CD8-positive, alpha-beta T cell (primary cell): ENCODE measurements at regions of chr12 and their contacts with region 1.

Region 1: GRCh38 chr12:46372544-46373110 is at the start of gene SLC38A2:
- DNase-seq: peak; percentile 94 to 99 (median 97)
- ATAC-seq: peak; percentile 84
- H3K4me3 ChIP-seq: peak within 1 kb of the TSS; percentile 93 to 96
- H3K4me3 Mint-ChIP-seq: peak within 1 kb of the TSS; percentile 89
- H3K27ac ChIP-seq: peak within 1 kb of the TSS; percentile 88 to 93
- H3K27ac Mint-ChIP-seq: peak within 1 kb of the TSS; percentile 98
- H3K4me1 ChIP-seq: peaks cover 38% of the 10 kb centered on the region
- H3K4me1 Mint-ChIP-seq: peaks cover 50% of the 10 kb centered on the region
- H3K27me3 ChIP-seq: no peaks in the 10 kb centered on the region
- H3K27me3 Mint-ChIP-seq: no peaks in the 10 kb centered on the region
- CTCF ChIP-seq: no peak
- total RNA-seq, gene SLC38A2: 268 to 279 TPM

Region 2: DNA sequence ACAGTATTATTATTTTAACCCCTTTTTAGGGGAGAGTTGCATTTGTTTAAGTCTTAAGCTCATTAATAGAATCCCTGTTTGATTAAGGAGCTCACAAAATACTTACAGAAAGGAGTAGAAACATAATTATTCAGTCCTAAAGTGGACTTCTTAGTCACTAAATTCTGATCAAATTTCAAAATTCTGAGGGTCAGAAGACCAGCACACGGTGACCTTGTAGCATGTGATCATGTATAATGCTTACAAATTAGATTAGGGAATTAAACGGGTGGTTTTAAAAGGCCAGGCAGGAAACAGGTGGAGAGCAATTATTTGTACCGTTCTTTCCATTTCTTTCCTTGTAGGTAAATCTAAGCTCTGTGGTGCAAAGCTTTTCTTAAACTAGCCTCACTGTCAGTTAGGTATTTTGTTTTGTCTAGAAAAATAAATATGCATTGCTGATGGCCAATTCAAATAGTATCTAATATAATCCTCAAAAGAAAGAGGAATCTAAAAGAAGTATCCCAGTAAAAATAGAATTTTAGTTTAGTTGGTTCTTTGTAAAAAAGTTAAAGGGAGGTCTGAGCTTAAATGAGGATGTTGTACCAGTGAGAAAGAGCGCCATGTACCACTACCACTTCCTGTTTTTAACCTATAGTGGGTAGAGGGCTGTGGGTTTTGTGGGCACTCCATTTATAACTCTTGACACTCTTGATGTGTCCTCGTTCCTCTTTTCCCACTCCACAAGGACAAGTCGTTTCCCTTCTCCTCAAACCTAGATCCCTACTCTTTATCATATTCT is 154.9 kb before region 1 on chr12:
- CTCF ChIA-PET with region 1: no interaction called
- POLR2A ChIA-PET with region 1: interaction called, 11 read pairs
- intact Hi-C with region 1: loop called (anchors 2 kb)
- DNase-seq: peak in 8 of 9 experiments; percentile 44 to 88 (median 66)
- ATAC-seq: peak; percentile 11
- H3K4me3 ChIP-seq: peak overlapping the region; percentile 34 to 47
- H3K4me3 Mint-ChIP-seq: peak overlapping the region; percentile 79
- H3K27ac ChIP-seq: peak overlapping the region; percentile 83 to 92
- H3K27ac Mint-ChIP-seq: peak overlapping the region; percentile 98
- H3K4me1 ChIP-seq: peaks cover 98% of the 10 kb centered on the region
- H3K4me1 Mint-ChIP-seq: peaks cover 96% of the 10 kb centered on the region
- H3K27me3 ChIP-seq: no peaks in the 10 kb centered on the region
- H3K27me3 Mint-ChIP-seq: no peaks in the 10 kb centered on the region
- CTCF ChIP-seq: no peak

Region 3: DNA sequence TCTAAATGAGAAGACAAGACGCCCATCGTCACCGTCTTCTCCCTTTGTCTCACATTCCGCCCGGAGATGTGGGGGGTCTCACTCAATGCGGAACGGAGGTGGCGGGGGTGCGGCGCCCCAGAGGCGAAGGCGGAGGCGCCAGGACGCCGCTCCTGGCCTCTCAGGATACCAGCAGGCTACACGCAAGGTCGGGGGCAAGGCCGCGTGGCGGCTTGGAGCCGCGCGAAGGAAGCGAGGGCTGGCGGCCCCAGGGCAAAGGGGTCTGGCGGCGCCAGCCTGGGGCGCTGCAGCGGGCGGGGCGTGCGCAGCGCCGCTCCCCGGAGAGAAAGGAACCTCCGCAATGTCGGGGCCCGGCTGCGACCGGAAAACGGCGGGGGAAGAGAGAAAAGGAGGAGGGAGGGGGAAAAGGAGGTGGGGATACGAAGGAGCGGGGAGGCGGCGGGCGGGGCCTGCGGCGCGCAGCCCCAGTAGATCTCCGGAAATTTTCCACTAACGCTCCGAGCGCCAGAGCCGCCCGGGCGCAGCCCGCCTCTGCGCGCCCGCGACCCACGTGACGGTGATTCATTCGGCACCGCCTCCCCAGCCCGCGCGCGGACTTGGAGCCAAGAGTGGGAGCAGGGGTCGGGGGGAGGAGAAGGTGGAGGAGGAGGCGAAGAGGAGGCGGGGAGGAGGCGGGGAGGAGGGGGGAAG is 10.5 kb after region 1 on chr12:
- CTCF ChIA-PET with region 1: interaction called, 3 read pairs
- POLR2A ChIA-PET with region 1: interaction called, 36 read pairs
- intact Hi-C with region 1: loop called (anchors 1 kb)
- DNase-seq: peak; percentile 70 to 97 (median 93)
- ATAC-seq: peak; percentile 76
- H3K4me3 ChIP-seq: peak overlapping the region; percentile 82 to 93
- H3K4me3 Mint-ChIP-seq: peak overlapping the region; percentile 90
- H3K27ac ChIP-seq: peak overlapping the region; percentile 91 to 93
- H3K27ac Mint-ChIP-seq: peak overlapping the region; percentile 96
- H3K4me1 ChIP-seq: peaks cover 38% of the 10 kb centered on the region
- H3K4me1 Mint-ChIP-seq: peaks cover 36% of the 10 kb centered on the region
- H3K27me3 ChIP-seq: no peaks in the 10 kb centered on the region
- H3K27me3 Mint-ChIP-seq: no peaks in the 10 kb centered on the region
- CTCF ChIP-seq: no peak

Region 4: DNA sequence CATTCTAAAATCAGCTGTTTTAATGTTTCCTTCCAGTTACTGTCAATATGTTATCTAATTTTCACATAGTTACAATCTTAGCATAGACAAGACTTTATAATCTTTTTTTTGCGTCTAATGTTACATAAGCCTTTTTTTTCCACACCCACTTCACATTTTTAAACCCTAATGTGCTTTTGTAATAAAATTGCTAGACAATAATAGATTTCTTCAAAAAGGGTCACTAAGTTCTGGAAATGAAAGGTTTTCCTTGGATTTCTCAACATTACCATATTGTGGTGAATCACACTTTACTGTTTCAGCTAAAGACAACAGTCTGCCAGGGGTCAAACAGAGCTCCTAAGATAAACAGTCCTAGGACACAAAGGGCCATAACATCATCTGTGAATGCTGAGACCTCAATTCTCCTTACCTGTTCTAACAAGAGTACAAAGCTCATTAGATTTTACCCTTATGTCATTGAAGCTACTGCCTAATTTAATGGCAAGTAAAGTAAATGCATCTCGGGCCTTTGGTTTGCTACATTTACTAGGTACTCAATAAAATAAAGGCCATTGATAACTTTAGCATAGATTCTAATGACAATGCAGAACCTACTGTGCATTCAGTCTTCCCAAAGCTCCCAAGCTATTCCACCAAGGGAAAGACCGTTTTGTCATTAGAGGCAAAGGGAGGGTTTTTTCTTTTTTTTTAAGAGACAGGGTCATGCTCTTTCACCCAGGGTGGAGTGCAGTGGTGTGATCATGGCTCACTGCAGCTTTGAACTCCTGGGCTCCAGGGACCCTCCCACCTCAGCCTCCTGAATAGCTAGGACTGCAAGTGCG is 111.2 kb after region 1 on chr12:
- CTCF ChIA-PET with region 1: no interaction called
- POLR2A ChIA-PET with region 1: no interaction called
- intact Hi-C with region 1: no loop called
- DNase-seq: no peak
- ATAC-seq: no peak
- H3K4me3 ChIP-seq: no peak overlapping the region
- H3K4me3 Mint-ChIP-seq: no peak overlapping the region
- H3K27ac ChIP-seq: no peak overlapping the region
- H3K27ac Mint-ChIP-seq: no peak overlapping the region
- H3K4me1 ChIP-seq: no peaks in the 10 kb centered on the region
- H3K4me1 Mint-ChIP-seq: peaks cover 2% of the 10 kb centered on the region
- H3K27me3 ChIP-seq: no peaks in the 10 kb centered on the region
- H3K27me3 Mint-ChIP-seq: no peaks in the 10 kb centered on the region
- CTCF ChIP-seq: no peak

Region 5: GRCh38 chr12:46523863-46524770 is 151.5 kb after region 1 on chr12:
- CTCF ChIA-PET with region 1: no interaction called
- POLR2A ChIA-PET with region 1: interaction called, 6 read pairs
- intact Hi-C with region 1: loop called in 1 of 2 experiments (anchors 5 kb)
- DNase-seq: peak in 7 of 9 experiments; percentile 14 to 68 (median 35)
- ATAC-seq: peak; percentile 97
- H3K4me3 ChIP-seq: peak overlapping the region; percentile 11 to 28
- H3K4me3 Mint-ChIP-seq: peak overlapping the region; percentile 74
- H3K27ac ChIP-seq: peak overlapping the region; percentile 41 to 66
- H3K27ac Mint-ChIP-seq: peak overlapping the region; percentile 95
- H3K4me1 ChIP-seq: peaks cover 23% of the 10 kb centered on the region
- H3K4me1 Mint-ChIP-seq: peaks cover 36% of the 10 kb centered on the region
- H3K27me3 ChIP-seq: no peaks in the 10 kb centered on the region
- H3K27me3 Mint-ChIP-seq: no peaks in the 10 kb centered on the region
- CTCF ChIP-seq: no peak

Region 6: DNA sequence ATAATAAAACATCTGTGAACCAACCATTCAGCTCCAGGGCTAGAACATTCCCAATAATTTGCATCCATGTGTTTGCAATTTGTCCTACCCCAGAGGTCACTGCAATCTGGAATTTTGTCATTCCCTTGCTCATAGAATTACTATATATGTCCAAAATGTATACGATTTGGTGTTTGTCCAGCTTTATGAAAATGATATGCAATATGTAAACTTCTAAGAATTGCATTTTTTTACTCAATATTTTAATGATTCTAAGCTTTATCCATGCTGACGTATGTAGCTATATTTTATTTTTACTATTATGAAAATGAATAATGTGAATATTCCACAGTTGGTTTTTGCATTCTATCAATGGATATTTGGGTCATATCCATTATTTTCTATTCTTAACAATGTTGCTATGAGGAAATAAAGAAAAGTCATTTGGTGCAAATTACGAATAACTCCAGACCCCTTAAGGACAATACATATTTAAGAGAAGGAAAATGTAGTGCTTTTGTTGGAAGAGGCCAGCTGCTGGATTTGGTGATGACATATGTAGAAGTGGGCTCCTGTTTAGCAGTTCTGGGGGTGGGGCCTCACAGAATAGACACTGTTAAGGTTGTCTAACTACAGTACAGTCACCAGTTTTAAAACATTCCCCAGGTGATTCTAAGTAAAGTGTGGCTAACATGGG is 313.8 kb after region 1 on chr12:
- CTCF ChIA-PET with region 1: no interaction called
- POLR2A ChIA-PET with region 1: no interaction called
- intact Hi-C with region 1: no loop called
- DNase-seq: no peak
- ATAC-seq: no peak
- H3K4me3 ChIP-seq: no peak overlapping the region
- H3K4me3 Mint-ChIP-seq: no peak overlapping the region
- H3K27ac ChIP-seq: no peak overlapping the region
- H3K27ac Mint-ChIP-seq: no peak overlapping the region
- H3K4me1 ChIP-seq: no peaks in the 10 kb centered on the region
- H3K4me1 Mint-ChIP-seq: no peaks in the 10 kb centered on the region
- H3K27me3 ChIP-seq: no peaks in the 10 kb centered on the region
- H3K27me3 Mint-ChIP-seq: no peaks in the 10 kb centered on the region
- CTCF ChIP-seq: no peak

Region 7: GRCh38 chr12:47397664-47398281 is 1025.1 kb after region 1 on chr12:
- CTCF ChIA-PET with region 1: no interaction called
- POLR2A ChIA-PET with region 1: no interaction called
- intact Hi-C with region 1: loop called in 1 of 2 experiments (anchors 10 kb)
- DNase-seq: peak in 5 of 9 experiments; percentile 35 to 80 (median 50)
- ATAC-seq: peak; percentile 82
- H3K4me3 ChIP-seq: no peak overlapping the region
- H3K4me3 Mint-ChIP-seq: no peak overlapping the region
- H3K27ac ChIP-seq: peak overlapping the region in 1 of 2 experiments; percentile 44
- H3K27ac Mint-ChIP-seq: peak overlapping the region; percentile 84
- H3K4me1 ChIP-seq: peaks cover 43% of the 10 kb centered on the region
- H3K4me1 Mint-ChIP-seq: peaks cover 58% of the 10 kb centered on the region
- H3K27me3 ChIP-seq: no peaks in the 10 kb centered on the region
- H3K27me3 Mint-ChIP-seq: no peaks in the 10 kb centered on the region
- CTCF ChIP-seq: peak; percentile 74